ENCODE measurements at regions of chr2 and their contacts with region 1.

Region 1: GRCh38 chr2:197461057-197461456 is 7.7 kb downstream of the COQ10B start:
- DNase-seq: no peak
- H3K4me3 ChIP-seq: no peak overlapping the region
- H3K4me3 Mint-ChIP-seq: peak overlapping the region; percentile 34
- H3K27ac Mint-ChIP-seq: peak overlapping the region; percentile 92
- H3K4me1 ChIP-seq: peaks cover 18% of the 10 kb centered on the region
- H3K4me1 Mint-ChIP-seq: peaks cover 30% of the 10 kb centered on the region
- H3K27me3 ChIP-seq: no peaks in the 10 kb centered on the region
- H3K27me3 Mint-ChIP-seq: no peaks in the 10 kb centered on the region
- CTCF ChIP-seq: no peak

Region 2: DNA sequence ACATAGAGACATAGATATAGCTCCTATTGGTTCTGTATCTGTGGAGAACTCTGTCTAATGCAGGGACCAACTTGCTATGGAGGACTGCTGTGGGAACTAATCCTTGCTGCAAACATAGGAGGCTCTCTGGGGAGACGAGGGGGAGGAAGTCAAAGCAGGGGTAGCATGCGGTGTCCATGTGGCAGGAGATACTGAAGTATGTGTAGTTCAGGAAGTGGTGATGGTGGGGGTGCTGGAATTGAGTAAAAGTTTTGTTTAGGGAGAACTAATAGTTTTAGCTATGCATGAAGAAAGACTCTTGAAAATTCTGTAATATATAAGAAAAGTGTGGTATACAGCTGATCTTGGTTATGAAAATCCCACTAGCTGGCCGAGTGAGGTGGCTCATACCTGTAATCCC is 212.4 kb before region 1 on chr2:
- CTCF ChIA-PET with region 1: no interaction called
- POLR2A ChIA-PET with region 1: no interaction called
- intact Hi-C with region 1: no loop called
- DNase-seq: no peak
- H3K4me3 ChIP-seq: no peak overlapping the region
- H3K4me3 Mint-ChIP-seq: no peak overlapping the region
- H3K27ac Mint-ChIP-seq: no peak overlapping the region
- H3K4me1 ChIP-seq: no peaks in the 10 kb centered on the region
- H3K4me1 Mint-ChIP-seq: no peaks in the 10 kb centered on the region
- H3K27me3 ChIP-seq: no peaks in the 10 kb centered on the region
- H3K27me3 Mint-ChIP-seq: peaks cover 8% of the 10 kb centered on the region
- CTCF ChIP-seq: no peak

Region 3: DNA sequence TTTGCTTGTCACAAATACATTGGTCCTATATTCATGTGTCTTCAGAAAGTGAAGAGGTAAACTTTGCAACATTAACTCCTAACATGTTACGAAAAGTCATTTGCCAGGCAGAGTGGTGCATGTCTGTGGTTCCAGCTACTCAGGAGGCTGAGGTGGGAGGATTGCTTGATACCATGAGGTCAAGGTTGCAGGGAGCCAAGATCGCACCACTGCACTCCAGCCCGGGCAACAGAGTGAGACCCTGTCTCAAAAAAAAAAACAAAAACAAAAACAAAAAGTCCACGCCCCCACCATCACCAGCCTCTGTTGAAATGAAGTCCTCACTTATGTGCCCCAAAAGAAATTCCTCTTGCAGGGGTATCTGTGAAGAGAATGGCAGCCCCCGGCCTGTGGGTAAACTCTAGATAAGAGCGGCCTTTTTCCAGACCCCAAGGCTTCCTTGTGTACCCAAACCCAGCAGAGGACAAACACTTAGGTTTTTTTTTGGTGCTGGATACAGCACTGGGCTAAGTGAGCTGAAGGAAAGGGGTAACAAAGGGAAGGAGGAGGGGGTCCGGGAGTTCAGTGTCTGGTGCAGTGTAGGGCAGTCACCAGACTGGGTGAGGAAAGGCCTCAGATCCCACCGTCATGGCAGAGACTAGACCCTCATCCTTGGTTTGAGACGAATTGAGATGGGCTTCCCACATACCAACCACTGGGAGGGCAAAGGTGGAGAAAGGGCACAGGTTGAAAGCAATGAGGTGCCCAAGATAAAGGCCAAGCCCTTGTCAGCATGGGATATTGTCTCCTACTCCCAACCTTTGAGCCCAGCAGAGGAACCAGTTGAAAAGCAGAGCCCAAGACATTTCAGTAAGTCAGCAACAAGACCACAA is 19.3 kb after region 1 on chr2:
- CTCF ChIA-PET with region 1: interaction called, 9 read pairs
- POLR2A ChIA-PET with region 1: no interaction called
- intact Hi-C with region 1: loop called (anchors 2 kb)
- DNase-seq: no peak
- H3K4me3 ChIP-seq: no peak overlapping the region
- H3K4me3 Mint-ChIP-seq: no peak overlapping the region
- H3K27ac Mint-ChIP-seq: no peak overlapping the region
- H3K4me1 ChIP-seq: 0 out of 2 replicates have a peak, but pooled peaks cover 9% of the 10 kb centered on the region
- H3K4me1 Mint-ChIP-seq: no peaks in the 10 kb centered on the region
- H3K27me3 ChIP-seq: no peaks in the 10 kb centered on the region
- H3K27me3 Mint-ChIP-seq: no peaks in the 10 kb centered on the region
- CTCF ChIP-seq: no peak

Measured in Caco-2 (cell line).